Vagina (tissue), 2 donors: ENCODE measurements at regions of chr7 and their contacts with region 1.

Region 1: DNA sequence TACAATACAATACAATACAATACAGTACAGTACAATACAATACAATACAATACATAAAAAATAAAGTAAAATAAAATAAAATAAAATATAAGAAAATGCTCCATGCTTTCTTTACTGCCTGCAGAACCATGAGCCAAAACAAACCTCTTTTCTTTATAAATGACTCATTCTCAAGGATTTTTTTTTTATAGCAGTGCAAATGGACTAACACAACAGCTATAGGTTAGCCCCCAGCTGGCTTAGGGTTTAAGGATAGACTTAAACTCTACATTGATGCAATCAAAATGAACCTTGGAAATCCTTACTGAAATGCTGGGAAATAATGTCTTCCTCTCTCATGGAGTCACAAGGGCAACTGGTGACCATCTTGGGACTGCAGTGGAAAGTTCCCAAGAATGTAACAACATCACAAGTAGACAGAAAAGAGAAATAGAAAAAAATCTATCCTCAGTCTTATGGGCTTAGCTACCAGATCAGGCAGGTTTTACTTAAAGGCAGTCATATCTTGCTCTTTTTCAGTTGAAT is 348.9 kb downstream of the ARL4A start:
- DNase-seq: no peak
- H3K4me3 ChIP-seq: no peak overlapping the region
- H3K27ac ChIP-seq: no peak overlapping the region
- H3K4me1 ChIP-seq: no peaks in the 10 kb centered on the region
- H3K27me3 ChIP-seq: no peaks in the 10 kb centered on the region
- CTCF ChIP-seq: no peak
- POLR2A ChIP-seq: no peak

Region 2: DNA sequence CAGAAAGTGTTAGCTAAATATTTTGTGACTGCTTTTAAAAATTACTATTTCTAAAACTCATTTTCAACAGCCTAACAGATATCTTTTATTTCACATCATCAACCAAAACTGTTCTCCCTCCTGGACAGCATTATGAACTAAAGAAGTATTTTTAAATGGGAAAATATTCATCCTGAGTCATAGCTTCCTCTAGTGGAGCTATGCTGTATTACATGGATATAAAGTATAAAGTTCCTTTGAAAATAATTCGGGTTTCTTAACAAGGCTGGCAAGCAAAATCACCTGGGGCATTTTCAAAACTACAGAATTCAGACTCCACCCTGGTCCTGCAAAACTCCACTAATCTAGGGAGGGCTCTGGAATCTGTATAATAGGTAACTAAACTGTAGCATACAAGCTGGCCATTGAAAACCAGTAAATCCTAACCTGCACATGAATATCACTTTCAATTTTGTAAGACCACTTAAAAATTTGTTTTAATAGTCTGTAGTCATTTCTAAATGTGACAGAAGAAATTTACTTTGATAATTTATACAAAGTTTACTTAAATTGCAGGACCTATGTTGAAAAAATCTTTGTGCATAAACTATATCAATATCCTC is 412.3 kb before region 1 on chr7:
- intact Hi-C with region 1: no loop called
- DNase-seq: no peak
- H3K4me3 ChIP-seq: no peak overlapping the region
- H3K27ac ChIP-seq: no peak overlapping the region
- H3K4me1 ChIP-seq: no peaks in the 10 kb centered on the region
- H3K27me3 ChIP-seq: no peaks in the 10 kb centered on the region
- CTCF ChIP-seq: peak in 2 of 3 experiments; percentile 28 to 61
- POLR2A ChIP-seq: no peak

Region 3: DNA sequence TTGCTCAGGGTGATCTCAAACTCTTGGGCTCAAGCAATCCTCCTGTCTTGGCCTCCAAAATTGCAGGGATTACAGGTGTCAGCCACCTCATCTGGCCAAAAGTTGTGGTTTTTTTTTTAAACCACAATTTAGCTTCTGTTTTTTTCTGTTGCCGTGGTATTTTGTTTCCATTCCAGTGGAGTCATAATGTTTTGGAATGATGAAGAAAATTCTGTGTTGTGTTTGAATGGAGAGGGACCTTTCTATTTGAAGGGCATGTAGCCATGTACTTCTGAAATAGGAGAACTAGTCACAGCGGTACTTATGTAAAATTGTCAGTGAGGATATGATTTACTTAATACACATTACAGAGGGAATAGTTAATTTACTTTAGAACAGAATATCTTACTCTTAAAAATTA is 147.6 kb before region 1 on chr7:
- intact Hi-C with region 1: no loop called
- DNase-seq: no peak
- H3K4me3 ChIP-seq: no peak overlapping the region
- H3K27ac ChIP-seq: no peak overlapping the region
- H3K4me1 ChIP-seq: no peaks in the 10 kb centered on the region
- H3K27me3 ChIP-seq: no peaks in the 10 kb centered on the region
- CTCF ChIP-seq: no peak
- POLR2A ChIP-seq: no peak

Region 4: GRCh38 chr7:13067036-13067435 is 30.7 kb after region 1 on chr7:
- intact Hi-C with region 1: no loop called
- DNase-seq: no peak
- H3K4me3 ChIP-seq: no peak overlapping the region
- H3K27ac ChIP-seq: no peak overlapping the region
- H3K4me1 ChIP-seq: no peaks in the 10 kb centered on the region
- H3K27me3 ChIP-seq: no peaks in the 10 kb centered on the region
- CTCF ChIP-seq: no peak
- POLR2A ChIP-seq: no peak

Region 5: GRCh38 chr7:14233076-14233867 is 1197.0 kb after region 1 on chr7:
- intact Hi-C with region 1: loop called (anchors 5 kb)
- DNase-seq: no peak
- H3K4me3 ChIP-seq: no peak overlapping the region
- H3K27ac ChIP-seq: no peak overlapping the region
- H3K4me1 ChIP-seq: no peaks in the 10 kb centered on the region
- H3K27me3 ChIP-seq: no peaks in the 10 kb centered on the region
- CTCF ChIP-seq: no peak
- POLR2A ChIP-seq: no peak